AG04449 (cell line): ENCODE measurements at regions of chr11 and their contacts with region 1.

Region 1: GRCh38 chr11:107770551-107770951 is 58.7 kb upstream of the SLN start:
- DNase-seq: peak; percentile 17
- H3K4me3 ChIP-seq: no peak overlapping the region
- CTCF ChIP-seq: no peak

Region 2: GRCh38 chr11:107549253-107549953 is 221.1 kb before region 1 on chr11:
- CTCF ChIA-PET with region 1: interaction called, 81 read pairs
- POLR2A ChIA-PET with region 1: interaction called, 3 read pairs
- DNase-seq: no peak
- H3K4me3 ChIP-seq: no peak overlapping the region
- CTCF ChIP-seq: peak; percentile 70

Region 3: GRCh38 chr11:107573438-107573837 is 197.1 kb before region 1 on chr11:
- CTCF ChIA-PET with region 1: interaction called, 70 read pairs
- POLR2A ChIA-PET with region 1: no interaction called
- DNase-seq: no peak
- H3K4me3 ChIP-seq: no peak overlapping the region
- CTCF ChIP-seq: no peak

Region 4: DNA sequence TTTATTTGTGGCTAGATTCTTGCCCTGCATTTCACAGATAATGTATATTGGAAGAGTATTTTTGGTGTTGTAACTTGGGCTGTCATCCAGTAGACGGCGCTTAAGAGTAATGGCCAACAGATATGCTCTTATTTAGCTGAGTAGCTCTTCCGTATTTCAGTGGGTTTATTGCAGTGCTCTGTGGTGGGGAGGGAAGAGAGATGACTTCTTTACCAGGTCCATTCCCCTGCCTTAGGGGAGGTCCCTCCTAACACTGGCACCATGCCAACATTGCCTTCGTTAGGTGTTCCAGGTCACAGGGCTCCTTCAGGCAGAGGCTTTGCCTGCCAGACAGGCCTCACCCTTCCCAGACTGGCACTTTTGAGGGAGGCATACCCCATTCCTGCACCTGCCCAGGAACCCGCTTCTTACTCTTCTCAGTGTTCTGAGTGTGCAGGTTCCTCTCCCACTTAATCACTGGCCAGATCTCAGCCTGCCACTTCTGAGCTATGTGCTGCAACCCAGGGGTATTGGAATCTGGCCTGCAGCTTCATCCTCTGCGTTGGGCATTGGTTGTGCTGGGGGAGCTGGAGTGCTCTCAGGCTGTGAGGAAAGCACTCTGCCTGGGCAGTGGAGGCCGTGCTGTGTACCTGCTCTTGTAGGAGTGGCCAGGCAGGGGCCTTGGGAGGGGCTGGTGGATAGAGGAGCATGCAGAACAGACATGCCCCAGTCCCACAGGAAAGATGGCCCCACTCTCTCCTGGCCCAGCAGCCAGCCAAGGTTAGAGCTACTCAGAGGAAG is 29.3 kb before region 1 on chr11:
- CTCF ChIA-PET with region 1: interaction called, 22 read pairs
- POLR2A ChIA-PET with region 1: no interaction called
- DNase-seq: no peak
- H3K4me3 ChIP-seq: no peak overlapping the region
- CTCF ChIP-seq: peak; percentile 61

Region 5: GRCh38 chr11:107780775-107781174 is 10.2 kb after region 1 on chr11:
- CTCF ChIA-PET with region 1: interaction called, 20 read pairs
- POLR2A ChIA-PET with region 1: no interaction called
- DNase-seq: no peak
- H3K4me3 ChIP-seq: no peak overlapping the region
- CTCF ChIP-seq: no peak

Region 6: GRCh38 chr11:107799218-107799859 is 28.8 kb after region 1 on chr11:
- CTCF ChIA-PET with region 1: interaction called, 10 read pairs
- POLR2A ChIA-PET with region 1: no interaction called
- DNase-seq: no peak
- H3K4me3 ChIP-seq: no peak overlapping the region
- CTCF ChIP-seq: peak; percentile 80